Right ventricle myocardium superior (tissue), 1 donor: ENCODE measurements at regions of chr1 and their contacts with region 1.

Region 1: DNA sequence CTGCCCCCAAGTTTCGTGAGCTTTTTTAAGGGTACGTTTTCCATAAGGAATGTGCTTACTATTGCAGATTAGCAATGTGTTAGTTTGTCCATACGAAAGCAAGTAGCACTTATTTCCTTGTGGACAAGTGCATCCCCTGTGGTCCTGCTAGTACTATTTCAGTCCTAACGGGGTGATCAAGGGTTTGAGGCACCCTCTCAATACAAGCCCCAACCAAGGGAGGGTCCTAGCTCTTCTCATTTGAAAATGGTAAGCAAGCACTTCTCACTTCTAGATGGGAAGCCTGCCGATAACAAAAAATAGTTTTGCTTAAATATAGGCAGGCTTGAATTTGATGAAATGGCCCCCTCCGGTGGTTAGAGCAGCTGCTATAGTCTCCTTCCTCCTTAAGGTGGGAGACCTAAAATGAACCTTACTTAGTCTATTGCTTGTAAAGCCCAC is 64.0 kb upstream of the HMCN1 start:
- DNase-seq: no peak
- ATAC-seq: peak; percentile 80

Region 2: GRCh38 chr1:185238447-185238846 is 431.8 kb before region 1 on chr1:
- intact Hi-C with region 1: loop called (anchors 10 kb)
- DNase-seq: no peak
- ATAC-seq: peak; percentile 60

Region 3: DNA sequence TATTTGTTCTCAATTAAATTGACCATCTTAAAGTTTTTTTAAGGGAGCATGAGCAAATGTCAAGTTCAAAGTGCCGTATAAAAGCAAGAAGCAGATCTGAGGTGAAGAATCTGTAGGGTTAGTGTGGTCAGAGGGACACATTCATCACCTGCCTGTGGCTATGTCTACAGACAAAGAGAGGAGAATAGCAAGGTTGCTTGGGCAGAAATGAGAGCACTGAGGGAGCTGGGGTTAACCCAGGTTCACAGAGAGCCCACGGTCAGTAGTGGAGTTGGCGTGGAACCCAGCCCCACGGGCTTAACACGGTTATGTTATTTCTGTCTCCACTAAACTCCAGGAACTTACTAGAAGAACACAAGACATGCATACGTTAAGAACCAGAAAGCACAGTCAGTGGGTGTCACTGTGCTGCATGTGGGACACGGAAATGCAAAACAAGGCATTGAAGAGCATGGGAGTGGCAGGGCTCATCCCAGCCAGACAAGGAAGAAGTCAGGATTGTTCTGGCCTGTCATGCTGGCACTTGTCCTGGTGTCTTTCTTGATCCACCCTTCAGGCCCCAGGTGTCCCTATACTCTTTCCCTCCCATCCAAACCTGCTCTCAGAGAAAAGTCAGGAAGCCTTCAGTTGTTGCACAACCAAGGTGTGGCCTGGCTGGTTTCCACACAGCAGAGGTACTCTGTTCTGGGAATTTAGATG is 257.7 kb before region 1 on chr1:
- intact Hi-C with region 1: no loop called
- DNase-seq: no peak
- ATAC-seq: no peak

Region 4: DNA sequence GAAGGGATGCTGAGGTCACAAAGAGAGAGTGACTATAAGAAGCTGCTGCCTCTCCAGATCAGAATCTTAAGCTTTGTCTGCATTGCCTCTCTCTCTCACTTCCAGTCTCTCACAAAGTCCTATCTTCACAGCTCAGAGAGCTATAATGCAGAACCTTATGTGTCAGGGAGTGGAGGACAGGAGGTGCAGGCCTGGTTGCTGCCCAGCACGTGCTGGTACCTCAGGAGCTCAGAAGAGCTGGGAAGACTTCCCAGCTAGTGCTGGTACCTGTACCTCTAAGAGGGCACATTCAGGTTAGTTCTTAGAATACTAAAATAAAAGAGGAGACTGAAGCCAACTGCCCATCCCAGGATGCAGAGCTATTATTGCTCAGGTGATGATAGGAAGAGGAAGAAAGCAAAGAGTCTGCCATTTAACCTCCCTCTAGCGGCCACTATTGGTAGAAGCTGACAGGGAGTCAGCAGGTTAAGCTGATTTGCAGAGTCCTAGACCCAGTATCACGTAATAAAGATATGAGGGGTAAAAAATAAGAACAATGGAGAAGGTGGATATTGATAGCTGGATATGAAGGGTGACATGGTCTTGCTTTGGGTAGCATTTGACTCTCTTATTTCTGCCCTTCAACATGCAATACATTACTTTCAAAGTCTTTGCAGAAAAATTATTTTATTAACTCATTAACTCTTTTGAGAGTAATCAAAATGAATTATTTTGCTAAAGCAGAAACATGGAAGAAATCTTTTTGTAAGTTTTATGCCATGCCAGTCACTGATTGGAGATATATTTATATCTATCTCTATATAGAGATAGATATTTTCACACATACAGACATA is 74.2 kb before region 1 on chr1:
- intact Hi-C with region 1: no loop called
- DNase-seq: no peak
- ATAC-seq: no peak

Region 5: GRCh38 chr1:185734929-185735700 is 64.9 kb after region 1 on chr1:
- intact Hi-C with region 1: no loop called
- DNase-seq: no peak
- ATAC-seq: no peak